ENCODE measurements at regions of chr2 and their contacts with region 1.

Region 1: DNA sequence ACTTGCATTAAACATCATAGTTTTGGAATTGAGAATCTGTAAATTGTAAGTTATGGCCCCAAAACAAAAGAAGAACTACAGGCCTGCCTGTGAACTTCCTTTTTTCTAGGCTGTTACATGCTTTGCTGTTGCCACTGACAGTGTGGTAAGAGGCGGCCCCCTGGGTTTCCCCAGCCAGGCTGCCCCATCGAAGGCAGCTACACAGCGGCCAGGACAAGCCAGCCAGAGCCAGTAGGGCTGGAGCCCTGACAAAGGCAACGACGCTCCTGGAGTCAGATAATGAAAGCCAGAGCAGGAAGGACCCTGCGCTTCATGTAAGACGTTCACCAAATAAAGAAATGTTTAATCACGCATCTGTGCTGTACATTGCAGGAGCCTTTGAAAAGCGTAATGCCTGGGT is 55.0 kb downstream of the ANKRD44 start:
- DNase-seq: peak; percentile 74
- ATAC-seq: peak; percentile 95
- H3K4me3 Mint-ChIP-seq: peak overlapping the region; percentile 77
- H3K27ac Mint-ChIP-seq: peak overlapping the region; percentile 94
- H3K4me1 Mint-ChIP-seq: peaks cover 78% of the 10 kb centered on the region
- H3K27me3 Mint-ChIP-seq: no peaks in the 10 kb centered on the region
- CTCF ChIP-seq: no peak

Region 2: DNA sequence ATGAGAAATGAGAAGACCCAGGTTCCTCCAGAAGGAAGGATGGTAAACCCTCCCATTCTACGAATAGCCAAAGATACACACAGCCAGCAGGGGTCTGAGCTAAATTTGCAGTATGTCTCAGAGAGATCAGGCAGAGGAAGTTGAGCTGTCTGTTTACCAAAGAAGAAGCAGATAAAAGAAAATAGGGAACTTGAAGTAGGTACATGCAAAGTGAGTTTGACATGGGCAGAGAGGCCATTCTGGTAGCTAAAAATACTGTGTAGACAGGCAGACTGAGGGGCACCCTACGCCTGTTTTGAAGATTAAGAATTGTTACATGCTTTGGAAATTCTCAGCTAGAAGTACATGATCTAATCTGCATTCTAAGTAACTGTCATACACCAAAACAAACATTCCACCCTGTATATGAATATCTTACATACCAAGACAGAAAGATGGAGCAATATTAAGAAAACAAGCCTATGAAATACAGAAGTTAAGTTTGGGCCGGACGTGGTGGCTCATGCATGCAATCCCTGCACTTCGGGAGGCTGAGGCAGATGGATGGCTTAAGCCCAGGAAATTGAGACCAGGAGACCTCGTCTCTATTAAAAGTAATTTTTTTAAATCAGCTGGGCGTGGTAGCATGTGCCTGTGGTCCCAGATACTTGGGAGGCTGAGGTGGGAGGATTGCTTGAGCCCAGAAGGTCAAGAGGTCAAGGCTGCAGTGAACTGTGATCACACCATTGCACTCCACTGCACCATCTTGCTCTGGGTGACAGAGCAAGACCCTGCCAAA is 102.9 kb before region 1 on chr2:
- CTCF ChIA-PET with region 1: no interaction called
- POLR2A ChIA-PET with region 1: no interaction called
- intact Hi-C with region 1: loop called (anchors 2 kb)
- DNase-seq: no peak
- ATAC-seq: peak; percentile 84
- H3K4me3 Mint-ChIP-seq: peak overlapping the region; percentile 79
- H3K27ac Mint-ChIP-seq: peak overlapping the region; percentile 97
- H3K4me1 Mint-ChIP-seq: peaks cover 97% of the 10 kb centered on the region
- H3K27me3 Mint-ChIP-seq: no peaks in the 10 kb centered on the region
- CTCF ChIP-seq: no peak

Region 3: DNA sequence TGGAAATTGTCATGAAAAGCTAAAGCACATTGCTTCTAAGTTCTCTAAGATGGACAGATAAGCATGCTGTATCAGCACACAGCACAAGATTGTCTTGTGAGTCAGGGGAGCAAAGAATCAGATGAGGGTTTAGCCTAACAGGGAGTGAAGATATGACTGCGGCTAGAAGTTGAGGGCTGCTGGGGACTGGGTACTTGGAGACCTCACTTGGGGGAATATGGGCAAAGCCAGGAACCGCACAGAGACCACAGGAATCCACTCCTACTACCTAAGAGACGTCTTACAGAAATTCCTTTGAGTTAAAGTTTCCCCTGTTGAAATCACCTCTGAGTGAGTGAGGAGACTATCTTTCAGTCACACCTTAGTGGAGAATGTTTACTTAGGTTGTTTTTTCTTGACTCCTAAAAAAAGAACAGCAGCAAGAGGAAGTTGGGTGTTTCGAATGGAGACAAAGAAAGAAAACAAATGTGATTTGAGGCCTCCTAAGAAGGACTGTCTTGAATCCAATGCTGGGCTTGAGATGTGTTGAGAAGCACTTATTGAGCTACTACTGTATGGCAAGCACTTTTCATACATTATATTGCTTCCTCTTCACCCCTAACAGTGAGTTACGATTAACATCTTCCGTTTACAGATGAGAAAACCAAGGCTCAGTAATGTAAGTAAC is 45.7 kb before region 1 on chr2:
- CTCF ChIA-PET with region 1: interaction called, 9 read pairs
- POLR2A ChIA-PET with region 1: interaction called, 12 read pairs
- intact Hi-C with region 1: loop called (anchors 2 kb)
- DNase-seq: no peak
- ATAC-seq: peak; percentile 13
- H3K4me3 Mint-ChIP-seq: peak overlapping the region; percentile 66
- H3K27ac Mint-ChIP-seq: peak overlapping the region; percentile 98
- H3K4me1 Mint-ChIP-seq: peaks cover 99% of the 10 kb centered on the region
- H3K27me3 Mint-ChIP-seq: no peaks in the 10 kb centered on the region
- CTCF ChIP-seq: no peak

Region 4: GRCh38 chr2:197239434-197239833 is 16.1 kb before region 1 on chr2:
- CTCF ChIA-PET with region 1: interaction called, 7 read pairs
- POLR2A ChIA-PET with region 1: interaction called, 12 read pairs
- intact Hi-C with region 1: loop called (anchors 1 kb)
- DNase-seq: no peak
- ATAC-seq: peak; percentile 45
- H3K4me3 Mint-ChIP-seq: peak overlapping the region; percentile 76
- H3K27ac Mint-ChIP-seq: peak overlapping the region; percentile 91
- H3K4me1 Mint-ChIP-seq: peaks cover 87% of the 10 kb centered on the region
- H3K27me3 Mint-ChIP-seq: no peaks in the 10 kb centered on the region
- CTCF ChIP-seq: no peak

Region 5: DNA sequence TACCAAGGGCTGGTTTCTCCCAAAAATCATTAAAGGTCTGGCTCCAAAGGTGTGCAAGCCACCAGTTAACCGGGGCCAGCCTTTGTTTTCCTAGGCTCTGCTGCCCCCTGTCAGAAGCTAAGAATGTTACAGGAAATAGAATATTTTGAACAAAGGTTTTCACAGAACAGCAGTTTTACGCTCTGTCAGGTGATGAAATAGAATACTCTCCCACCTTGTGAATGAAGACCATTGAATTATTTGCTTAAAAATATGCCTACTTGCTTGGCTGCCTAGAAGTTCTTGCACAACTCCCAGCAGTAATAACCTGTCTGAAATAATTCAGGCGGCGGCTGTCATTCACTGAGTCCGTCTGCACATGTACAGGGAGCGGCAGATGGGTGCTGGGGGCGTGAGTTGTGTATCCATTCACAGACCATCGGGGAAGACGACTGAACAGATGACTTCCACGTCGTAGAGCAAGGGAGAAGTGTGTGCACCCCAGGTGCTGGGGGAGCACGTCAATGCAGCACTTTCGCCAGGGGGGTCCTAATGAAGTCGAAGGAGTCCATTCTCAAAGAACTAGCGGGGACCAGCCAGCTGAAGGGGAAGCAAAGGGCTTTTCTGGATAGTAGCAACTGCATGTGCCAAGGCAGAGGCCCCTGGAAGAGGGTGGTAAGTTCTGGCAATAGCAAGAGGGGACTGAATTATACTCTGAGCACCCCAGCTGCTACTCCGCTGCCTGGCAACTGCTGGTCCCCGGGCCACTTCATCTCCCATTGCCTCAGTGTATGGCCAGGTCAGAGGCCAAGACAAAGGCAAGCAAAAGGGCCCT is 123.2 kb after region 1 on chr2:
- CTCF ChIA-PET with region 1: interaction called, 3 read pairs
- POLR2A ChIA-PET with region 1: no interaction called
- intact Hi-C with region 1: loop called (anchors 10 kb)
- DNase-seq: peak; percentile 29
- ATAC-seq: peak; percentile 66
- H3K4me3 Mint-ChIP-seq: no peak overlapping the region
- H3K27ac Mint-ChIP-seq: no peak overlapping the region
- H3K4me1 Mint-ChIP-seq: peaks cover 11% of the 10 kb centered on the region
- H3K27me3 Mint-ChIP-seq: no peaks in the 10 kb centered on the region
- CTCF ChIP-seq: peak; percentile 43

Region 6: GRCh38 chr2:198042189-198042588 is 786.6 kb after region 1 on chr2:
- CTCF ChIA-PET with region 1: no interaction called
- POLR2A ChIA-PET with region 1: no interaction called
- intact Hi-C with region 1: no loop called
- DNase-seq: no peak
- ATAC-seq: no peak
- H3K4me3 Mint-ChIP-seq: no peak overlapping the region
- H3K27ac Mint-ChIP-seq: no peak overlapping the region
- H3K4me1 Mint-ChIP-seq: no peaks in the 10 kb centered on the region
- H3K27me3 Mint-ChIP-seq: peaks cover 3% of the 10 kb centered on the region
- CTCF ChIP-seq: no peak

Measured in activated B cell treated with CpG ODN at 0.5 μM for 24 hours (primary cell).